PC-3 (cell line): ENCODE measurements at regions of chr9 and their contacts with region 1.

Region 1: DNA sequence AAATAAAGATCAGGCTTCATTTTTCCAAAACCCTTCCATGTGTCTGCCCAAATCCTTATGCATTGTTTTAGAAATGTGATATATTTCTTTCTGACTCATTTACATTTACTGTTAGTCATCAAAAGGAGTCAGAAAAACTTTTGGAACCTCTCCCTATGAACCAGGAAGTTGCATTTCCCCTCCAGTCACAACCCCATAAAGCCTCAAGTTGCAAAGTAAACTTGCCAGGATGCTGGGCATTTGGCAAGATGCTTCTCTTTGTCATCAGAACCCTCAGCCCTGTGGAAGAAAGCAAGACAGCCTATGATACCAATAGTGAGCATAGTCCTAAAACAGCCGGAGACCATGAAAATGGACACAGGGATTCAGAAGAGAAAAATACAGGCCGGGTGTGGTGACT is 84.2 kb downstream of the MUSK start:
- DNase-seq: peak; percentile 98
- ATAC-seq: peak; percentile 91
- H3K4me3 ChIP-seq: no peak overlapping the region
- H3K27ac ChIP-seq: peak overlapping the region; percentile 99
- H3K4me1 ChIP-seq: peaks cover 43% of the 10 kb centered on the region
- H3K27me3 ChIP-seq: no peaks in the 10 kb centered on the region
- CTCF ChIP-seq: no peak

Region 2: GRCh38 chr9:110476251-110476650 is 276.5 kb before region 1 on chr9:
- CTCF ChIA-PET with region 1: no interaction called
- POLR2A ChIA-PET with region 1: no interaction called
- intact Hi-C with region 1: no loop called
- DNase-seq: no peak
- ATAC-seq: no peak
- H3K4me3 ChIP-seq: no peak overlapping the region
- H3K27ac ChIP-seq: no peak overlapping the region
- H3K4me1 ChIP-seq: no peaks in the 10 kb centered on the region
- H3K27me3 ChIP-seq: no peaks in the 10 kb centered on the region
- CTCF ChIP-seq: no peak

Region 3: DNA sequence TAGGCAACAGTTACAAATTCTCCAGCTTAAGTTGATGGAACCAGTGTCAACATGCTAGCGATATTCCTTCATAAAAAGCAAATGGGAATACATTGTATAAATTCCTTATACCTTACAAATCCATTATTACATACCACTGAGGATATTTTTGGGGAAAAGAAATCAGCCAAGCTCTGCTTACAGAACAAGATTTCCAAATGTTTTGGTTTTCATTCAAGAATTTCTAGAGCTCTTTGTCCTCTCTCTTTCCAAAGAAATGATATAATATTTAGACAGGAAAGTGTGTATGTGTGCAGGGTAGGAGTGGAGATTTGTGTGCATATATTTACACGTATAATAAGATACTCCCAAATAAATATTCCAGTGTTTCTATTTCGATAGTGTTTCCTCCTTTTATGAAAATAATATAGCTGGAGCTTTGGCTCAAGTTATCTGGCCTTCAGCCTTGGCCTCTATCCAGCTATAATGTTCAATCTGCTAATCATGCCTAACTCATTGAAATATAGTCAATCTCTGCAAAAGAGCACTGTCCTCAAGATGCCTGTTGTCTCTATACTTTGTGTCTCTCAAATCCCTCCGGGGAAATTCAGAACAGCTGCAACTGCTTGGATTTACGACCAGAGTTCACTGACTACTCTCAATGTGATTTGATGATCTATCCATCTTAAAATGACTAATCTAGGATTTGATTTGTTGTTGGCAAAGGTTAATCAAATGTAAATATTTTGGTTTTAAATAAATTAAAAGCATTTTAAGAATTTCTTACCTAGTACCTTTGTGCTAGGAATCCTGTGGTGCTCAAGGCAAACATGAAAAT is 214.3 kb before region 1 on chr9:
- CTCF ChIA-PET with region 1: no interaction called
- POLR2A ChIA-PET with region 1: no interaction called
- intact Hi-C with region 1: no loop called
- DNase-seq: peak; percentile 44
- ATAC-seq: no peak; the same call in 1 of the 2 replicates
- H3K4me3 ChIP-seq: no peak overlapping the region
- H3K27ac ChIP-seq: peak overlapping the region; percentile 22
- H3K4me1 ChIP-seq: peaks cover 19% of the 10 kb centered on the region
- H3K27me3 ChIP-seq: no peaks in the 10 kb centered on the region
- CTCF ChIP-seq: no peak

Region 4: GRCh38 chr9:110650991-110651411 is 101.8 kb before region 1 on chr9:
- CTCF ChIA-PET with region 1: no interaction called
- POLR2A ChIA-PET with region 1: no interaction called
- intact Hi-C with region 1: loop called (anchors 2 kb)
- DNase-seq: peak; percentile 77
- ATAC-seq: peak; percentile 84
- H3K4me3 ChIP-seq: no peak overlapping the region
- H3K27ac ChIP-seq: peak overlapping the region; percentile 89
- H3K4me1 ChIP-seq: peaks cover 26% of the 10 kb centered on the region
- H3K27me3 ChIP-seq: no peaks in the 10 kb centered on the region
- CTCF ChIP-seq: no peak

Region 5: DNA sequence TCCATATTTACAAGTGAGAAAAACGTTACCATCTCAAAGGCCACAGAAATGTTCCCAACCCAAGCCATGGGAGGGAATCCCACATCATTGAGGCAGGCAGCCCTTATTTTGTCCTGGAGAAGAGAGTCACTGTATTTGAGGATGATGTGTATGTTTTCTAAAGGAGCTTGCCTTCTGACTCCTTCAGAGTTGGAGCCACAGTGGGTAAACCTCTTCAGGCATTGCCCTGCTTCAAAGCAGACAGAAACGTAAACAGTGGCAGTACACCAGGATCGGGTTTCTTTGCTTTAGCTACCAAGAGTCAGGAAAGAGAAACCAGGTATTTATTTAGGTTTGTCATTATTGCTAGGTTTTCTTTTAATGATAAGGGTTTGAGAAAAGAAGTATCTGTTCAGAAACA is 38.5 kb before region 1 on chr9:
- CTCF ChIA-PET with region 1: no interaction called
- POLR2A ChIA-PET with region 1: interaction called, 3 read pairs
- intact Hi-C with region 1: loop called (anchors 5 kb)
- DNase-seq: peak; percentile 74
- ATAC-seq: peak; percentile 95
- H3K4me3 ChIP-seq: peak overlapping the region; percentile 64
- H3K27ac ChIP-seq: peak overlapping the region; percentile 98
- H3K4me1 ChIP-seq: peaks cover 24% of the 10 kb centered on the region
- H3K27me3 ChIP-seq: no peaks in the 10 kb centered on the region
- CTCF ChIP-seq: no peak

Region 6: GRCh38 chr9:110797611-110798010 is 44.8 kb after region 1 on chr9:
- CTCF ChIA-PET with region 1: no interaction called
- POLR2A ChIA-PET with region 1: no interaction called
- intact Hi-C with region 1: loop called (anchors 5 kb)
- DNase-seq: peak; percentile 91
- ATAC-seq: peak; percentile 67
- H3K4me3 ChIP-seq: no peak overlapping the region; the same call in 1 of the 2 replicates
- H3K27ac ChIP-seq: peak overlapping the region; percentile 99
- H3K4me1 ChIP-seq: peaks cover 43% of the 10 kb centered on the region
- H3K27me3 ChIP-seq: no peaks in the 10 kb centered on the region
- CTCF ChIP-seq: no peak

Region 7: DNA sequence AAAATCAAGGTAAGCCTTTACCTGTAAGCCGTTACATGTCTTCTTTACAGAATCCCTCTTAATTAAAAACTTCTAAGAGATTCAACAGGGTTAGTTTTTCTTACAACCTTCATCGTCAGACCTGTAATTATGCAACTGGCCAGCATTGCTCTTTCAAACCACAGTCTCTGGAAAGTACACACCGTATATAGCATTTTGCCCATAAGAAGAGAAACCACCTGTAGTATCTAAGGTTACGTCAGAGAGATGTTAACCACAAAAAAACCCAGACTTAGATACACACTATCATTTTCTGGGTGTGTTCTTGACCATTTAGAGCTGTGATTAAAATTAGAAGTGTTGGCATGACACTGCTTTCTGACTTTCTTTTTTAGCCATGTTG is 55.8 kb after region 1 on chr9:
- CTCF ChIA-PET with region 1: no interaction called
- POLR2A ChIA-PET with region 1: no interaction called
- intact Hi-C with region 1: no loop called
- DNase-seq: no peak
- ATAC-seq: no peak
- H3K4me3 ChIP-seq: no peak overlapping the region
- H3K27ac ChIP-seq: 0 out of 2 replicates have a peak overlapping the region, but pooled peaks have one; percentile 11
- H3K4me1 ChIP-seq: peaks cover 9% of the 10 kb centered on the region; the same call in 1 of the 2 replicates
- H3K27me3 ChIP-seq: no peaks in the 10 kb centered on the region
- CTCF ChIP-seq: no peak

Region 8: GRCh38 chr9:110911659-110912418 is 159.1 kb after region 1 on chr9:
- CTCF ChIA-PET with region 1: no interaction called
- POLR2A ChIA-PET with region 1: no interaction called
- intact Hi-C with region 1: loop called (anchors 5 kb)
- DNase-seq: peak; percentile 90
- ATAC-seq: peak; percentile 84
- H3K4me3 ChIP-seq: peak overlapping the region; percentile 23; the same call in 1 of the 2 replicates
- H3K27ac ChIP-seq: peak overlapping the region; percentile 100
- H3K4me1 ChIP-seq: peaks cover 47% of the 10 kb centered on the region
- H3K27me3 ChIP-seq: no peaks in the 10 kb centered on the region
- CTCF ChIP-seq: no peak

Region 9: GRCh38 chr9:111037381-111038305 is 284.9 kb after region 1 on chr9:
- CTCF ChIA-PET with region 1: no interaction called
- POLR2A ChIA-PET with region 1: no interaction called
- intact Hi-C with region 1: loop called (anchors 5 kb)
- DNase-seq: peak; percentile 42
- ATAC-seq: peak; percentile 39
- H3K4me3 ChIP-seq: peak overlapping the region; percentile 83
- H3K27ac ChIP-seq: peak overlapping the region; percentile 66
- H3K4me1 ChIP-seq: peaks cover 37% of the 10 kb centered on the region
- H3K27me3 ChIP-seq: no peaks in the 10 kb centered on the region
- CTCF ChIP-seq: no peak